CD4-positive, alpha-beta memory T cell (primary cell): ENCODE measurements at regions of chr12 and their contacts with region 1.

Region 1: GRCh38 chr12:92570056-92570753 is 132.6 kb upstream of the PLEKHG7 start:
- DNase-seq: peak; percentile 54 to 76 (median 74)
- H3K4me3 ChIP-seq: no peak overlapping the region
- H3K4me3 Mint-ChIP-seq: no peak overlapping the region
- H3K27ac ChIP-seq: no peak overlapping the region
- H3K27ac Mint-ChIP-seq: no peak overlapping the region
- H3K4me1 ChIP-seq: peaks cover 26% of the 10 kb centered on the region
- H3K4me1 Mint-ChIP-seq: peaks cover 4 to 17% (median 10%) of the 10 kb centered on the region in 4 donors
- H3K27me3 ChIP-seq: no peaks in the 10 kb centered on the region
- H3K27me3 Mint-ChIP-seq: no peaks in the 10 kb centered on the region

Region 2: GRCh38 chr12:91361864-91362263 is 1208.3 kb before region 1 on chr12:
- CTCF ChIA-PET with region 1: no interaction called
- POLR2A ChIA-PET with region 1: no interaction called
- intact Hi-C with region 1: loop called (anchors 1 kb)
- DNase-seq: peak in 4 of 5 donors; percentile 32 to 39 (median 35)
- H3K4me3 ChIP-seq: no peak overlapping the region
- H3K4me3 Mint-ChIP-seq: no peak overlapping the region
- H3K27ac ChIP-seq: no peak overlapping the region
- H3K27ac Mint-ChIP-seq: no peak overlapping the region
- H3K4me1 ChIP-seq: no peaks in the 10 kb centered on the region
- H3K4me1 Mint-ChIP-seq: peaks cover 0 to 2% (median 0%) of the 10 kb centered on the region in 4 donors
- H3K27me3 ChIP-seq: no peaks in the 10 kb centered on the region
- H3K27me3 Mint-ChIP-seq: peaks cover 1 to 9% of the 10 kb centered on the region in 2 donors

Region 3: GRCh38 chr12:91877022-91877421 is 693.2 kb before region 1 on chr12:
- CTCF ChIA-PET with region 1: no interaction called
- POLR2A ChIA-PET with region 1: interaction called, 6 read pairs
- intact Hi-C with region 1: loop called (anchors 2 kb)
- DNase-seq: peak; percentile 87 to 98 (median 93)
- H3K4me3 ChIP-seq: peak overlapping the region; percentile 9 to 14
- H3K4me3 Mint-ChIP-seq: peak overlapping the region; percentile 73 to 86 (median 79)
- H3K27ac ChIP-seq: peak overlapping the region; percentile 93
- H3K27ac Mint-ChIP-seq: peak overlapping the region; percentile 99 to 100 (median 100)
- H3K4me1 ChIP-seq: peaks cover 76% of the 10 kb centered on the region
- H3K4me1 Mint-ChIP-seq: peaks cover 54 to 79% (median 64%) of the 10 kb centered on the region in 4 donors
- H3K27me3 ChIP-seq: no peaks in the 10 kb centered on the region
- H3K27me3 Mint-ChIP-seq: no peaks in the 10 kb centered on the region

Region 4: DNA sequence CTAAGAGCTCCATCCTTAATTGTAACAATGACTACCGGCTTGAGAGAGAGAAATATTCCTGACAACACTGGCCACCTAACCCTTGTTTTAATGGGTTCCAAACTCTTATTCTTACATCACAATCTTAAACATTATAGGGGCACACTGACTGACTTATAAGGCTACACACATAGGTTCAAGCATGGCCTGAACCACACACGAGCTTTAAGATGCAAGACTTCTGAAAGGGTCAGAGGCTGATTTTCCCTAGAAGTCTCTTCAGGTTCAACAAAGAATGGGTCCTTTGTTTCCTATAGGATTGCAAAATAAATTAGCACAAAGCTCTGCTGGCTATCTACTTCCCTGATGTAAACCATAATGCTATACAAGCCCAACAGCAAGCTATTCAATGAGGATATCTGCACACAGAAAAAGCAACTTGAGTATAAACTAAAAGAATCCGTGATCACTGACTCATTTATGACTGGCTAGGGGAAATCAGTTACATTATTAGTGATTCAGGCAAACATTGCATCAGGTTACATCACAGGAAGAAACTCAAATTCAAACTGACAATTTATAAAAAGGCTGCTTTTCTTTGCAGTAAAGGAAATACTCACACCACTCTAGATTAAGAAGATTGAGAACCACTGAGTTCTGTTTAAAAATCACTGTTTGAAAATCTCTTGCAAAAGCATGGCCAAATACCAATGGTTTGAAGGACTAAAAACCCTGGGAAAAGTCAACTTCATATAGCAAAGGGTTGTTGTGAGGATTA is 433.1 kb before region 1 on chr12:
- CTCF ChIA-PET with region 1: interaction called, 7 read pairs
- POLR2A ChIA-PET with region 1: interaction called, 220 read pairs
- intact Hi-C with region 1: no loop called
- DNase-seq: no peak
- H3K4me3 ChIP-seq: peak overlapping the region; percentile 83 to 89
- H3K4me3 Mint-ChIP-seq: peak overlapping the region; percentile 87 to 100 (median 100)
- H3K27ac ChIP-seq: peak overlapping the region; percentile 86
- H3K27ac Mint-ChIP-seq: peak overlapping the region; percentile 83 to 100 (median 99)
- H3K4me1 ChIP-seq: peaks cover 52% of the 10 kb centered on the region
- H3K4me1 Mint-ChIP-seq: peaks cover 43 to 59% (median 49%) of the 10 kb centered on the region in 4 donors
- H3K27me3 ChIP-seq: no peaks in the 10 kb centered on the region
- H3K27me3 Mint-ChIP-seq: no peaks in the 10 kb centered on the region

Region 5: DNA sequence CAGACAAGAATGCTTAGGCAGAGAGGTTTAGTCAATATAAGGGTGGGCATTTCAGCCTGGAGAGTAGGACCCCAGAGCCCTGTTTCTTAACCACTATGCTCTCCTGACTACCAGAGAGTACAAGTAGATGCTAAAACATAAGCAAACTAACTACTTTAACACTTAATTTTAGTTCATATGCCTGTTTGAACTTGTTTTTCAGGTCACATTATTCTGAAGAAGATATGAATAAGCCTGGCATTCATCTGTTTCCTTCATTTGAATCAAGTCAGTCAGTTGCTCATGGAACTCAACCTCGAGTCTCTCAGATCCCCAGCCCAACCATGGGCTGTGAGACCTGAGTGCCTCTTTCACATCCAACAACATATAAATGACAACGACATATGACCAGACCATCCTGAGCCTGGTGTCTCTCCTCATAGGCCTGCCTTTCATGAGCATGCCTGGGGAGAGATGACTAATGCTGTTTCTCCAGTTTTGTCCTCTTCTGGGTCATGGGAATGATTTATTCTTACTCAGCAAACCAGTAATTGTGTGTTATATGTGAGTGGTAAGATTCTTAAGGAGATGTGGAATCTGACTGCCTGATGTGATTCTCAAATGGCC is 173.5 kb before region 1 on chr12:
- CTCF ChIA-PET with region 1: interaction called, 13 read pairs
- POLR2A ChIA-PET with region 1: interaction called, 7 read pairs
- intact Hi-C with region 1: loop called (anchors 1 kb)
- DNase-seq: no peak
- H3K4me3 ChIP-seq: no peak overlapping the region
- H3K4me3 Mint-ChIP-seq: peak overlapping the region in 6 of 8 donors; percentile 19 to 81 (median 57)
- H3K27ac ChIP-seq: peak overlapping the region; percentile 72
- H3K27ac Mint-ChIP-seq: peak overlapping the region; percentile 93 to 98 (median 97)
- H3K4me1 ChIP-seq: peaks cover 93% of the 10 kb centered on the region
- H3K4me1 Mint-ChIP-seq: peaks cover 74 to 100% (median 89%) of the 10 kb centered on the region in 4 donors
- H3K27me3 ChIP-seq: no peaks in the 10 kb centered on the region
- H3K27me3 Mint-ChIP-seq: no peaks in the 10 kb centered on the region

Region 6: DNA sequence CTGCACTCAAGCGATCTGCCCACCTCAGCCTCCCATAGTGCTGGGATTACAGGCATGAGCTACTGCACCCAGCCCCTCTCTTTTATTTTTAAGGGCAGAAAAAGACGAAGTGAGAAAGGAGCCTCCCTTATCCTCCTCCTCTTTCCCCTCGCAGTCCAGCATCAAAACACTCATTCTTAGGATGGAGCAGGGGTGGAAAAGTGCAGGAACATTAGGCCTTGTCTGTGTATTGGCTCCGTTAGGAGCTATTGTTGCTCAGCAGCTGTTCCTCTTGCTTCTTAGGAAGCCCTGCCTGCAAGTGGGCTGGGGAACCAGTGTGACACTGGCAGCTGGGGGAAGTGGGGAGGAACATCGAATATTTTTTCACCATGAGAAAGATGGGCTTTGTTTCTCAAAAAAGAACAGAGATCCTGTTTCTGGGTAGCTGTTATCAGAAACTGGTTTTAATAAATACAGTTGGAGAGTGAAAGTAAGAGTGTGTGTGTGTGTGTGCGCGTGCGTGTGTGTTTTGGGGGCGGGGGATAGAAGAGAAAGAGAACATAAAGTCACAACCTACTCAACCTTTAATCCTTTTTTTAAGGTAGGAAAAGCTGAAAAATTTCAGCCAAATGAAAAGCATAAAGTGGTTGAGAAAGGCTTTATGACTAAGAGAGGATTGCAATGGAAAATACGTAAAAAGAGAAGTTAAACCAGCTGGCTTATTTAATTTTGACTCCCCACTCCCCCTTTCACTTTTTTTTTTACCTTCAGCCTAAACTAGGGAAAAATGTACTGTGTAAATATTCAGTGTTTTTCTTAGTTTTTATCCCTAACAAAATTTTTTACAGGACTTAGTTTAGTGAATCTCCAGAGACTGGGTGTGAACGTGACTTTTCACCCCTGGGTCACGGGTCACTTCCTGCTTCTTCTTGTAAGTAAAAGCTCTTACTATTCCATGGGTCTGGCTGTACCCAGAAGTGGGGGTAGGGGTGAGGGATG is 64.7 kb before region 1 on chr12:
- CTCF ChIA-PET with region 1: interaction called, 50 read pairs
- POLR2A ChIA-PET with region 1: interaction called, 31 read pairs
- intact Hi-C with region 1: loop called (anchors 2 kb)
- DNase-seq: peak; percentile 45 to 60 (median 56)
- H3K4me3 ChIP-seq: peak overlapping the region; percentile 28 to 30
- H3K4me3 Mint-ChIP-seq: peak overlapping the region; percentile 80 to 94 (median 91)
- H3K27ac ChIP-seq: peak overlapping the region; percentile 58
- H3K27ac Mint-ChIP-seq: peak overlapping the region; percentile 75 to 98 (median 94)
- H3K4me1 ChIP-seq: peaks cover 42% of the 10 kb centered on the region
- H3K4me1 Mint-ChIP-seq: peaks cover 24 to 37% (median 32%) of the 10 kb centered on the region in 4 donors
- H3K27me3 ChIP-seq: no peaks in the 10 kb centered on the region
- H3K27me3 Mint-ChIP-seq: no peaks in the 10 kb centered on the region

Region 7: DNA sequence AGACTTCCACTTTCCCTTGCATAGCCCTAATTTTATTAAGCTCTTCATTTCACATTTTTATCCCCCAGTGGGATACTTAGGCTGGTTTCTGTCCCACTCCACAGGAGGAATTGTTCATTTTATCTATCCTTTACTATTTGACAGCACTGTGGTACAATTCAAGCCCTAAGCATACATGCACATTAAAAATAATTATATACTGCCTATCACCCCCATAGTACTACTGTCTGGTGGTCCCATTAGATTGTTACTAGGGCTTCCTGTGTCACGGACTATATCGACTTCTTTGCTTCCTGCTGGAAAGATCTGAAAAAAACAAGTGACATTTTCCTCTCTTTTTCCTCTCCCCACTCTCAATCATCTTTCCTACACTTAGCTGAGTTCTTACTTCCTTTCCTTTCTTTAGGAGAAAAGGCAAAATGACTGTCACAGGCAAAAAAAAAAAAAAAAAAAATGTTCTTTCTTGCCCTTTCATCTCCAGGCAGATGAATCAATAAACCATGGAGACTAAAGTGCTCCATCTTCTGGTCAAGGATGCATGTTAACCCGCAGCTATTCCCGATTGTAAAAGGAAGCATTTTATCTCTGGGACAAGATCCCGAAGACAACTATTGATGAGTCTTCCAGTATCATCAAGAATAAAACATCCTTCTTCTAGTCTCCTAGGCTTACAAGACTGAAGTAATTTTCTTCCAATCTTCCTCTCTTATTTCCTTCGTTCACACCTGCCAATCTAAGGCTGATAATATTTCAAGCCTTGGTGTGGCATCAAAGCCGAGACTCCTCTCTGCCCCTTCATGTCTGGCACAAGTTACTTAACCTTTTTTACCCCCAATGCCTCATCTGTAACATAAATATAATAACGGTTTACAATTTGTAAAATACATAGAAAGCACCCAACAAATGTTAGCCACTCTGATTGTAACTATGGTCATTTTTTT is 38.2 kb after region 1 on chr12:
- CTCF ChIA-PET with region 1: interaction called, 35 read pairs
- POLR2A ChIA-PET with region 1: interaction called, 6 read pairs
- intact Hi-C with region 1: loop called (anchors 1 kb)
- DNase-seq: peak in 2 of 5 donors; percentile 4 to 27
- H3K4me3 ChIP-seq: no peak overlapping the region
- H3K4me3 Mint-ChIP-seq: peak overlapping the region in 5 of 8 donors; percentile 22 to 64 (median 41)
- H3K27ac ChIP-seq: no peak overlapping the region
- H3K27ac Mint-ChIP-seq: peak overlapping the region in 6 of 7 donors; percentile 4 to 88 (median 71)
- H3K4me1 ChIP-seq: peaks cover 8% of the 10 kb centered on the region
- H3K4me1 Mint-ChIP-seq: peaks cover 10 to 11% (median 10%) of the 10 kb centered on the region in 4 donors
- H3K27me3 ChIP-seq: no peaks in the 10 kb centered on the region
- H3K27me3 Mint-ChIP-seq: no peaks in the 10 kb centered on the region

Region 8: DNA sequence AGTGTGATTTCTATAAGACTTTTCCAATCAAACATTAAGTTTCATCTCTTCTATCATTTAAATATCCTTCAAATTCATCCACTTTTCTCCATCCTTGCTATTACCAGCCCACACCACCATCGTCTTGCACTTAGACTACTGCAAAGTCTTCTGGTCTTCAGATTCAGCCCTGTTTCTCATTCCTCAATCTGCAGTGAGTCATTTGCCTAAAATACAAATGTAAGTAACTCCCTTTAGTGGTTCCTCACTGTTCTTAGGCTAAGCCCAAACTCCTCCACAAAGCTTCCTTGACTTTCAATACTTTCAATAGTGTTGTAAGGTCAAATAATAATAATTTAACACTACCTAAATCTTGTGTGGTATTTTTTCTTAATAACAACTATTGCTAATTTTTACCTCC is 215.8 kb after region 1 on chr12:
- CTCF ChIA-PET with region 1: no interaction called
- POLR2A ChIA-PET with region 1: no interaction called
- intact Hi-C with region 1: no loop called
- DNase-seq: no peak
- H3K4me3 ChIP-seq: no peak overlapping the region
- H3K4me3 Mint-ChIP-seq: no peak overlapping the region
- H3K27ac ChIP-seq: no peak overlapping the region
- H3K27ac Mint-ChIP-seq: peak overlapping the region in 2 of 7 donors; percentile 30 to 43
- H3K4me1 ChIP-seq: no peaks in the 10 kb centered on the region
- H3K4me1 Mint-ChIP-seq: peaks cover 0 to 7% (median 7%) of the 10 kb centered on the region in 4 donors
- H3K27me3 ChIP-seq: no peaks in the 10 kb centered on the region
- H3K27me3 Mint-ChIP-seq: no peaks in the 10 kb centered on the region